GM12878 (cell line): ENCODE measurements at regions of chr19 and their contacts with region 1.

Region 1: DNA sequence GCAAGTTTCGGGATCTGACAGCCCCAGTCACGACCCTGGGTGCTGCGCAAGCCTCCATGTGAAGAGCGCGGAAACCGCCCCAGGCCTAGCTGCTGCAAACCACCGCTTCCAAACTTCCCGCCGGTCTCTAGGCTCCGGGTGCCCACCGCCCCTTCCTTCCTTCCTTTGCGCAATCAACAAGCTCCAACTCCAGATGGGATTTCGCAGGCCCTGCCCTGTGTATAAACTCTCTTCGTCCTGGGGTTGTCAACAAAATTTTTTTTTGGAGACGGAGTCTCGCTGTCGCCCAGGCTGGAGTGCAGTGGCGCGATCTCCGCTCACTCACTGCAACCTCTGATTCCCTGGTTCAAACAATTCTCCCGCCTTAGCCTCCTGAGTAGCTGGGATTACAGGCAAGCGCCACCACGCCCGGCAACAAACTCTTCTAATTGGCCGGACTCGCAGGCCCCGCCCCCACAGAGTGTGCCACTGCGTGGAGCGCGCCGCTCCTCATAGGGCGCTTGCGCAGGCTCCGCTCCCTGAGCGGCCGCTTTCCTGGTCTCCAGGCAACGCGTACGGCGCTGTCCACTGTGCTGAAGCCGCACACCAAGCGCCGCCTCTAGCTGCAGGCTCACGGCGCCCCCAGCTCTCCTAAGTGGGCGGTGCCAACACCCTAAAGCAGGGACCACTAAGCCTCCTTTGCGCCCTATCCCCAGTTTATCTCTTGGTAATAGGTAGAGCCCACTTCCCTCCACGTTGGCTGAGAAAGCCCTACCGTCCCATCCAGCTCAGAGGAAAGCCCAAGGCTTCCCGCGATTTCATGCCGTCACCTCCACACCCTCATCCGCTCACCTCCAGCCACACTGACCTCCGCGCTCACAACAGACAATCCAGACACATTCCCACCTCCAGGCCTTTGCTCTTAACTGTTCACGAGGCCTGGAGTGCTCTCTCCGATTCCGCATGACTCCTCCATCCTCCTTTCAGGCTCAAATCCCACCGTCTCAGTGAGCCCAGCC is 5.5 kb upstream of the QTRT1 start:
- DNase-seq: peak; percentile 45
- ATAC-seq: peak; percentile 97
- H3K4me3 ChIP-seq: no peak overlapping the region
- H3K27ac ChIP-seq: no peak overlapping the region
- H3K4me1 ChIP-seq: no peaks in the 10 kb centered on the region
- H3K27me3 ChIP-seq: no peaks in the 10 kb centered on the region
- CTCF ChIP-seq: no peak
- EP300 ChIP-seq: no peak
- POLR2A ChIP-seq: no peak
- RAD21 ChIP-seq: no peak

Region 2: GRCh38 chr19:10510301-10510802 is 185.3 kb before region 1 on chr19:
- CTCF ChIA-PET with region 1: interaction called, 20 read pairs
- POLR2A ChIA-PET with region 1: interaction called, 5 read pairs
- RAD21 ChIA-PET with region 1: interaction called, 5 read pairs
- SMC1A ChIA-PET with region 1: interaction called, 4 read pairs
- in situ Hi-C with region 1: no loop called
- intact Hi-C with region 1: no loop called
- DNase-seq: no peak
- ATAC-seq: peak; percentile 39
- H3K4me3 ChIP-seq: no peak overlapping the region
- H3K27ac ChIP-seq: no peak overlapping the region
- H3K4me1 ChIP-seq: peaks cover 8% of the 10 kb centered on the region
- H3K27me3 ChIP-seq: peaks cover 9 to 14% of the 10 kb centered on the region in 2 experiments
- CTCF ChIP-seq: peak; percentile 55 to 91 (median 88)
- EP300 ChIP-seq: no peak
- POLR2A ChIP-seq: no peak
- RAD21 ChIP-seq: no peak

Region 3: DNA sequence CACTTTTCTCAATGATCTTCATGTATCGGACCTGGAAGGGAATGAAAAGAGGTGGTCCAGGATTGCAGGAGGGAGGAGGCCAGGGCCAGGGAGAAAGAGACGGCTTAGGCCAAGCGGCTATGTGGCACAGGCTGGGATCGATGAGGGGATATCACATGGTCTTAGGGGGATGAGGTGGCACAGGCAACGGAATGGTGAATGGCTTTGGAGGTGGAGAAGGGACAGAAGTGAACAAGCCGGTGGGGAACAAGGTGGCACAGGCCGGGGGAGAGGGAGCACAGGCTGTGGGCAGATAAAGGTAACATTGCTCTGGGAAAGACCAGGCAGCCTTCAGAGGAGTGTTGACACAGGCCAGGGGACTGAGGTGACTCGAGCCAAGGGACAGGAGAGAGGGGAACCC is 121.2 kb before region 1 on chr19:
- CTCF ChIA-PET with region 1: interaction called, 210 read pairs
- POLR2A ChIA-PET with region 1: interaction called, 3 read pairs
- RAD21 ChIA-PET with region 1: interaction called, 136 read pairs
- SMC1A ChIA-PET with region 1: interaction called, 103 read pairs
- in situ Hi-C with region 1: no loop called
- intact Hi-C with region 1: no loop called
- DNase-seq: no peak
- ATAC-seq: no peak
- H3K4me3 ChIP-seq: no peak overlapping the region
- H3K27ac ChIP-seq: no peak overlapping the region
- H3K4me1 ChIP-seq: no peaks in the 10 kb centered on the region
- H3K27me3 ChIP-seq: no peaks in the 10 kb centered on the region
- CTCF ChIP-seq: no peak
- EP300 ChIP-seq: no peak
- POLR2A ChIP-seq: no peak
- RAD21 ChIP-seq: no peak

Region 4: DNA sequence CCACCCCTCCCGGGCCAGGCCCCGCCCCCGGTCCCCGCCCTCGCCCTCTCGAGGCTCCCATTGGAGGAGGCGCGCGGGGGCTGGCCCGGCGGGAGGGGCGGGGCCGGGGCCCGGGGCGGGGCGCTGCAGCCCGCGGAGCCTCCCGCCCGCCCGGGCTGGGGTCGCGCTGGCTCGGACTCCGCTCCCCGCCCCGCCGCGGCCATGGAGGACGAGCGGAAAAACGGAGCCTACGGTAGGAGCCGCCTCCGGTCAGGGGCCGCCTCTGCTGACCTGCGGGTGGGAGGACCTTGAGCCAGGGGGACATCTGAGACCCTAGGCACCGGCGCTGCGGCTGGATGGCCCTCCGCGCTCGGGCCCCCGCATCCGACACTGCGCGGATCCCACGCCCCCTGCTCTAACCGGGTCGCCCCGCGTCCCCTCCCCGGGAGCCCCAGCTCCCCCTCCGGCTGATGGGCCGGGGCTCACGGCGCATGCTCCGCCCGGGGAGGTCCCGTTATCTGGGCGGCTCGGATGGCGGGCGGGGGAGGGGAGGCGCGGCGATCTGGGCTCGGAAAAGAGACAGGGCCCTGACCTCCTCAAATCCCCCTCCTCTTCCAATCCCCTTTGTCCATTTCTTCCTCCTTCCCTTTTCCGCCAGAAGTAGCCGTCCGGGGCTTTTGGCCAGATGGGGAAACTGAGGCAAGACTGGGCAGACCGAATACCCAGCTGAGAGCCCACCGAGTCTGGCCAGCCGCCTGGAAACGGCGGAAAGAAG is 93.2 kb before region 1 on chr19:
- CTCF ChIA-PET with region 1: interaction called, 4 read pairs
- POLR2A ChIA-PET with region 1: interaction called, 5 read pairs
- RAD21 ChIA-PET with region 1: interaction called, 21 read pairs
- SMC1A ChIA-PET with region 1: interaction called, 8 read pairs
- in situ Hi-C with region 1: no loop called
- intact Hi-C with region 1: no loop called
- DNase-seq: no peak
- ATAC-seq: peak; percentile 81
- H3K4me3 ChIP-seq: peak overlapping the region; percentile 98
- H3K27ac ChIP-seq: peak overlapping the region; percentile 98
- H3K4me1 ChIP-seq: peaks cover 20% of the 10 kb centered on the region
- H3K27me3 ChIP-seq: no peaks in the 10 kb centered on the region
- CTCF ChIP-seq: no peak
- EP300 ChIP-seq: no peak
- POLR2A ChIP-seq: peak; percentile 73
- RAD21 ChIP-seq: no peak

Region 5: GRCh38 chr19:10662384-10663251 is 33.1 kb before region 1 on chr19:
- CTCF ChIA-PET with region 1: interaction called, 50 read pairs
- POLR2A ChIA-PET with region 1: interaction called, 3 read pairs
- RAD21 ChIA-PET with region 1: interaction called, 12 read pairs
- SMC1A ChIA-PET with region 1: interaction called, 9 read pairs
- in situ Hi-C with region 1: no loop called
- intact Hi-C with region 1: loop called (anchors 5 kb)
- DNase-seq: no peak
- ATAC-seq: peak; percentile 58
- H3K4me3 ChIP-seq: peak overlapping the region; percentile 44; the same call in 1 of the 2 replicates
- H3K27ac ChIP-seq: peak overlapping the region; percentile 29; the same call in 1 of the 2 replicates
- H3K4me1 ChIP-seq: peaks cover 32% of the 10 kb centered on the region
- H3K27me3 ChIP-seq: no peaks in the 10 kb centered on the region
- CTCF ChIP-seq: no peak
- EP300 ChIP-seq: no peak
- POLR2A ChIP-seq: no peak
- RAD21 ChIP-seq: no peak

Region 6: GRCh38 chr19:10717356-10718204 is 21.9 kb after region 1 on chr19 and contains the start of gene DNM2:
- CTCF ChIA-PET with region 1: interaction called, 45 read pairs
- POLR2A ChIA-PET with region 1: no interaction called
- RAD21 ChIA-PET with region 1: interaction called, 15 read pairs
- SMC1A ChIA-PET with region 1: interaction called, 39 read pairs
- in situ Hi-C with region 1: no loop called
- intact Hi-C with region 1: no loop called
- DNase-seq: peak; percentile 100
- ATAC-seq: peak; percentile 93
- H3K4me3 ChIP-seq: peak within 1 kb of the TSS; percentile 81
- H3K27ac ChIP-seq: peak within 1 kb of the TSS; percentile 92
- H3K4me1 ChIP-seq: peaks cover 11% of the 10 kb centered on the region
- H3K27me3 ChIP-seq: no peaks in the 10 kb centered on the region
- CTCF ChIP-seq: peak; percentile 69 to 96 (median 89)
- EP300 ChIP-seq: no peak
- POLR2A ChIP-seq: peak; percentile 94
- RAD21 ChIP-seq: peak; percentile 79
- polyA plus RNA-seq, gene DNM2: 1.2 to 3.4 TPM

Region 7: DNA sequence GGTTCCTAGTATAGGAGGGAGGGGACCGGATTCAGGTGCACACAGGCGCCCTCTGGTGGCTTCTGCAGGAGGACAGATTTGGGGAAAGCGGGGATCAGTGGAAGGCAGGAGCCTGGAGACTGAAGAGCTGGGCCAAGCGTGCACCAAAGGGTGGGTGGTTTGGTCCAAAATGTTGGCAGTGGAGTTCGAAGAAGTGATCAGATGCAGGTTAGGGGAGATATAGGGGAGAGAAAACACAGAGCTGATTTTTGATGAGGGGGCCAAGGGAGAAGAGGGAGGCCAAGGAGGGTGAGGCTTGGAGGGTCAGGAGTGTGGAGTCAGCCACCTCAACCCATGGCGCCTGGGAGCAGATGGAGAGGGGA is 168.8 kb after region 1 on chr19:
- CTCF ChIA-PET with region 1: interaction called, 66 read pairs
- POLR2A ChIA-PET with region 1: no interaction called
- RAD21 ChIA-PET with region 1: interaction called, 6 read pairs
- SMC1A ChIA-PET with region 1: interaction called, 17 read pairs
- in situ Hi-C with region 1: no loop called
- intact Hi-C with region 1: no loop called
- DNase-seq: no peak
- ATAC-seq: peak; percentile 83
- H3K4me3 ChIP-seq: no peak overlapping the region
- H3K27ac ChIP-seq: no peak overlapping the region
- H3K4me1 ChIP-seq: peaks cover 16% of the 10 kb centered on the region
- H3K27me3 ChIP-seq: no peaks in the 10 kb centered on the region
- CTCF ChIP-seq: peak; percentile 88 to 96 (median 94)
- EP300 ChIP-seq: no peak
- POLR2A ChIP-seq: no peak
- RAD21 ChIP-seq: peak; percentile 71